ENCODE measurements at regions of chr9 and their contacts with region 1.

Region 1: GRCh38 chr9:111369873-111370272 is 39.8 kb upstream of the OR2K2 start:
- DNase-seq: no peak
- ATAC-seq: no peak

Region 2: GRCh38 chr9:111423389-111423788 is 53.5 kb after region 1 on chr9:
- intact Hi-C with region 1: loop called (anchors 5 kb)
- DNase-seq: no peak
- ATAC-seq: no peak

Region 3: DNA sequence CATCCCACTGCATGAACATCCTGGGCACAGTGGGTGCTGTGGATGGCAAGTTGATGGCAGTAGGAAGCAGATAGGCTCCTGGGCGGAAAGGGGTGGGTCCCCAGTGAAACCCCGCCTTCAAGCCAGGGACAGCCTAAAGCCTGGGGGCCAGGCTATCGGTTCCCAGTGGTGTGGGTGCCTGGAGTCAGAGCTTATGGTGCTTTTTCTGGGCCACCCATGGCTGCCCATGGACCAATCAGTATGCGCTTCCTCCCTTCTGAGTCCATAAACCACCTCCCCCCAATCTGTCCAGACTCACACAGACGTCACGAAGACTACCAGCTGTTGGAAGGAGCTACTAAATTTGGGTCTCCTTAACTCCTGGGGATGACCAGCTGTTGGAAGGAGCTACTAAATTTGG is 131.8 kb after region 1 on chr9:
- intact Hi-C with region 1: no loop called
- DNase-seq: no peak
- ATAC-seq: no peak